K562 (cell line): ENCODE measurements at regions of chr18 and their contacts with region 1.

Region 1: GRCh38 chr18:11654736-11655605 is 34.1 kb upstream of the GNAL start:
- DNase-seq: peak; percentile 58 to 75 (median 70)
- ATAC-seq: peak; percentile 91
- H3K4me3 ChIP-seq: no peak overlapping the region
- H3K27ac ChIP-seq: no peak overlapping the region
- H3K4me1 ChIP-seq: no peaks in the 10 kb centered on the region
- H3K27me3 ChIP-seq: peaks cover 11 to 41% of the 10 kb centered on the region in 2 experiments; a peak in 3 of 5 replicates
- CTCF ChIP-seq: peak; percentile 77 to 87 (median 80)
- EP300 ChIP-seq: no peak
- POLR2A ChIP-seq: no peak
- RAD21 ChIP-seq: peak; percentile 54 to 80

Region 2: DNA sequence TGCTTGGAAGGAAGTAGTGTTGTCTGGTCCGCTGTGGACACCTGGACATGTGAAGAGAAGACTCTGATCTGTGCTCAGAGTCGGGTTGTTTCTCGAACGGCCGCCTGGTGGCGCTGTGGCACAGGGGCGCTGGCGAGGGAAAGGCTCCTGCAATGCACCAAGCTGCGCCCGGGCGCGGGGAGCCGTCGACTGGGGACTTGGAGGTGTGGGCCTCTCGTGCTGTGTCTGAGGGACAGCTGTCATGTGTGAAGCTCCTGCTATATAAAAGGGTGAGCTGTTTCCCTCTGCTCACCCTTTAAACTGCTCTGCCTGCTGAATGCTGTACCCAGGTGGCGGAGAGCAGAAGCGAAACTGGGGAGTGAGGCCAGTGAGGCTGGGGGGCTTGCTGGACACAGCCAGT is 78.1 kb after region 1 on chr18:
- CTCF ChIA-PET with region 1: no interaction called
- POLR2A ChIA-PET with region 1: no interaction called
- in situ Hi-C with region 1: loop called (anchors 5 kb)
- intact Hi-C with region 1: loop called (anchors 5 kb)
- DNase-seq: peak; percentile 78 to 81 (median 78)
- ATAC-seq: peak; percentile 99
- H3K4me3 ChIP-seq: no peak overlapping the region
- H3K27ac ChIP-seq: no peak overlapping the region
- H3K4me1 ChIP-seq: peaks cover 0 to 4% of the 10 kb centered on the region in 2 experiments; a peak in 1 of 5 replicates
- H3K27me3 ChIP-seq: peaks cover 12 to 47% of the 10 kb centered on the region in 2 experiments
- CTCF ChIP-seq: peak; percentile 86 to 93 (median 92)
- EP300 ChIP-seq: no peak
- POLR2A ChIP-seq: no peak
- RAD21 ChIP-seq: peak; percentile 71 to 93

Region 3: GRCh38 chr18:11741505-11742145 is 86.7 kb after region 1 on chr18:
- CTCF ChIA-PET with region 1: interaction called, 7 read pairs
- POLR2A ChIA-PET with region 1: no interaction called
- in situ Hi-C with region 1: no loop called
- intact Hi-C with region 1: loop called (anchors 5 kb)
- DNase-seq: peak; percentile 35 to 63 (median 61)
- ATAC-seq: peak; percentile 88
- H3K4me3 ChIP-seq: no peak overlapping the region
- H3K27ac ChIP-seq: no peak overlapping the region
- H3K4me1 ChIP-seq: no peaks in the 10 kb centered on the region
- H3K27me3 ChIP-seq: peaks cover 36 to 58% of the 10 kb centered on the region in 2 experiments
- CTCF ChIP-seq: peak; percentile 58 to 69 (median 63)
- EP300 ChIP-seq: no peak
- POLR2A ChIP-seq: no peak
- RAD21 ChIP-seq: peak in 1 of 2 experiments; percentile 62; a peak in 3 of 4 replicates

Region 4: DNA sequence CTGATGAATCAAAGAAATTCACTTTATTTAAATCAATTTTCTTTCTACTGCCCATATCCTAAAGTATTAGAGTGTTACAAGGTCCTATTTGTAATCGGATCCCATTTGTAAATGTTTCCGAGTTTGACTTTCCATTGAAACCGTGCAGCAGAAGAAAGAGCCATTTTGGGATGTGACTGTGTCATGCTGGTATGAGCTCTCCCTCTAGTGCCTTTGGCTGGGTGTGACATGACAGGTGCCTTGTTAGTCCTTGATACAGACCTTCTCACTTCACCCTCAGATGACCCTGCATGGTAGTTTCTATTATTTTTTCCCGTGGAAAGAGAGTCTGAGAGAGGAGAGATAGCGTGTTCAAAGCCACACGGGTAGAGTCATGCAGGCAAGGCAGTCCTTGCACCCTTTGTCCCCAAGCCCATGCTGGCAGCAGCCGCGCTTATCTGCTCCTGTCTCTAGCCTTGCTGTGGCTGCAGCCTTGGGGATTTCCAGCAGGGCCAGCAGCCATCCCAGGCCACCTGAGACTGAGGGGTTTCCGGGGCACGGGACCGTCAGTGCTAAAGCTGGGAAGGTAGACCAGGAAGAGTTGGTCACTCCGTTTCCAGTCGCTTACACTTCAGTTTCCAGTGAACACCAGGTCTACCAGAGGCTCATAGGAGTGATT is 217.6 kb after region 1 on chr18:
- CTCF ChIA-PET with region 1: no interaction called
- POLR2A ChIA-PET with region 1: no interaction called
- in situ Hi-C with region 1: no loop called
- intact Hi-C with region 1: loop called (anchors 5 kb)
- DNase-seq: peak; percentile 62 to 72 (median 68)
- ATAC-seq: peak; percentile 98
- H3K4me3 ChIP-seq: no peak overlapping the region
- H3K27ac ChIP-seq: no peak overlapping the region
- H3K4me1 ChIP-seq: peaks cover 0 to 3% of the 10 kb centered on the region in 2 experiments; a peak in 1 of 5 replicates
- H3K27me3 ChIP-seq: peaks cover 0 to 17% of the 10 kb centered on the region in 2 experiments; a peak in 4 of 5 replicates
- CTCF ChIP-seq: peak; percentile 72 to 84 (median 79)
- EP300 ChIP-seq: no peak
- POLR2A ChIP-seq: no peak
- RAD21 ChIP-seq: peak; percentile 79 to 95

Region 5: DNA sequence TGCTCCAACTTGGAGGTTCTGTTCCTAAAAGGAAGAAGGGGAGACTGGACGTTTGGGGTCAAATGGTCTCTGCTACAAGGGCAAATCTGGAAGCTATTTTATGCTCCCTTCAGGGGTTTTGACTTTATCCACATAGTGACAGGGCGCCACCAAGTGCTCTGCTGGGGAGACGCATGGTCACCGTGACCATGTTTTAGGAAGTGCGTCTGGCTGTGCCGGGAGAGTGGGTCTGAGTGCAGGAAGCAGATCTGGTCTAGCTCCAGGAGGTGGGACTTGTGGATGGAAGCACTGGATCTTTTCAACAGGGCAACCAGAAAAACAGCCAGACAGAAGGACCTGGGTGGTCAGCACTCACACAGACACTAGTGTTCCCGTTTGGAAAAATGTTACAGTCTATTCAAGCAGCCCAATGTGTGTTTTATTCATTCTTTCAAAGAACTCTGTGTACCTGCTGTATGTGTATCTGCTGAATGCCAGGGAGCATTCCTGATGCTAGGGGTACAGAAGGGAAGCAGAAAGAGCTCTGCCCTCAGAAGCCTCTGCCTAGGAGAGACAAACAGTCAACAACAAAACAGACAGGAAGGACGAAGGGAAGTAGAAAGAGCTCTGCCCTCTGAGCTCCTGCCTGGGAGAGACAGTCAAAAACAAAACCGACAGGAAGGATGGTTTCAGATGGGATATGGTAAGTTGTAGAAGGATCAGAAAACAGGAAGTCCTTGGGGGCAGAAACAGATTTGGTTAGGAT is 340.6 kb after region 1 on chr18:
- CTCF ChIA-PET with region 1: no interaction called
- POLR2A ChIA-PET with region 1: no interaction called
- in situ Hi-C with region 1: no loop called
- intact Hi-C with region 1: loop called (anchors 5 kb)
- DNase-seq: peak; percentile 65 to 83 (median 72)
- ATAC-seq: peak; percentile 95
- H3K4me3 ChIP-seq: no peak overlapping the region
- H3K27ac ChIP-seq: no peak overlapping the region
- H3K4me1 ChIP-seq: peaks cover 0 to 4% of the 10 kb centered on the region in 2 experiments; a peak in 2 of 5 replicates
- H3K27me3 ChIP-seq: peaks cover 0 to 4% of the 10 kb centered on the region in 2 experiments; a peak in 1 of 5 replicates
- CTCF ChIP-seq: peak; percentile 94 to 96 (median 96)
- EP300 ChIP-seq: no peak
- POLR2A ChIP-seq: no peak
- RAD21 ChIP-seq: peak; percentile 73 to 97

Region 6: GRCh38 chr18:12038639-12039417 is 383.9 kb after region 1 on chr18:
- CTCF ChIA-PET with region 1: interaction called, 12 read pairs
- POLR2A ChIA-PET with region 1: no interaction called
- in situ Hi-C with region 1: loop called (anchors 10 kb)
- intact Hi-C with region 1: loop called (anchors 10 kb)
- DNase-seq: peak; percentile 72 to 84 (median 80)
- ATAC-seq: peak; percentile 96
- H3K4me3 ChIP-seq: peak overlapping the region; percentile 31; the same call in 1 of the 2 replicates
- H3K27ac ChIP-seq: no peak overlapping the region
- H3K4me1 ChIP-seq: peaks cover 0 to 13% of the 10 kb centered on the region in 2 experiments; a peak in 2 of 5 replicates
- H3K27me3 ChIP-seq: peaks cover 4 to 38% of the 10 kb centered on the region in 2 experiments; a peak in 4 of 5 replicates
- CTCF ChIP-seq: peak; percentile 89 to 93 (median 90)
- EP300 ChIP-seq: no peak
- POLR2A ChIP-seq: no peak
- RAD21 ChIP-seq: peak; percentile 92 to 96

Region 7: DNA sequence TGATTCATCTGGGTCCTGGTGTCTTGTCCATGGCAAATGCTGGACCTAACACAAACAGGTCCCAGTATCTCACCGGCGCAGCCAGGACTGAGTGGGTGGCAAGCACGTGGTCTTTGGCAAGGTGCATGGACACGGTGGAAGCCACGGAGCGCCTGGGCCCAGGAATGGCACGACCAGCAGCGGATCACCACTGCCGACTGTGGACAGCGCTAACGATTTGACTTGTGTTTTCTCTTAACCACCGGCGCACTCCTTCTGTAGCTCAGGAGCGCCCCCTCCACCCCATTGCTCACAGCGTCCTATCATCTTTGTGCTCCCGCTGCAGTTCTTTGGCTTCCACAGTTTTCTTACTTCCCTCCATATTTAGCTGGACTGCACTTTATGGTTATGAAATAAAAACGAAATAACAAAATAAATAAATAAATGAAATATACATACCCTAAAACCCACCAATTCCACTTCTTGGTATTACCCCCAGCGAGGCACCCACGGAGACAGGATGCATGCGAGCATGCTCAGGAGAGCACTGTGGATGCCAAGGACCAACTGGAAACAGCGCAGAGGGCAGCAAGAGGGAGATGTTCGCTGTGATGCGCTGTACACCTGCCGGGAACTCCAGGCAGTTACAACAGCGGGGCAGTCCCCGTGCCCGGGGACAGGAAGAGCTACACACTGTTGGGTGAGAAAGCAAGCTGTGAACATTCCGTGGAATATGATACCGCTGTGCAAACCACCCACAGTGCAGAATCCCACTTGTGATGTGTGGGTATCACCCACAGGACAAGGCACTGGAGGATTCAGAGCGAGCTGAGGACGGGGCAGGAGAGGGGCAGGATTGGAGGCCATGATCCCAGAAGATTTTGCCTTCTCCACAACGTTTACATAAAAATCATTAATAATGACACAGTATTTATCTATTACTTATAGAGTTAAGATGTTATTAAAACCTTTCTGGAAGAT is 592.2 kb after region 1 on chr18:
- CTCF ChIA-PET with region 1: interaction called, 3 read pairs
- POLR2A ChIA-PET with region 1: no interaction called
- in situ Hi-C with region 1: loop called (anchors 10 kb)
- intact Hi-C with region 1: no loop called
- DNase-seq: peak; percentile 62 to 78 (median 67)
- ATAC-seq: peak; percentile 97
- H3K4me3 ChIP-seq: no peak overlapping the region
- H3K27ac ChIP-seq: no peak overlapping the region
- H3K4me1 ChIP-seq: peaks cover 0 to 10% of the 10 kb centered on the region in 2 experiments; a peak in 2 of 5 replicates
- H3K27me3 ChIP-seq: peaks cover 44 to 64% of the 10 kb centered on the region in 2 experiments
- CTCF ChIP-seq: peak; percentile 84 to 90 (median 86)
- EP300 ChIP-seq: no peak
- POLR2A ChIP-seq: no peak
- RAD21 ChIP-seq: peak; percentile 70 to 82

Region 8: DNA sequence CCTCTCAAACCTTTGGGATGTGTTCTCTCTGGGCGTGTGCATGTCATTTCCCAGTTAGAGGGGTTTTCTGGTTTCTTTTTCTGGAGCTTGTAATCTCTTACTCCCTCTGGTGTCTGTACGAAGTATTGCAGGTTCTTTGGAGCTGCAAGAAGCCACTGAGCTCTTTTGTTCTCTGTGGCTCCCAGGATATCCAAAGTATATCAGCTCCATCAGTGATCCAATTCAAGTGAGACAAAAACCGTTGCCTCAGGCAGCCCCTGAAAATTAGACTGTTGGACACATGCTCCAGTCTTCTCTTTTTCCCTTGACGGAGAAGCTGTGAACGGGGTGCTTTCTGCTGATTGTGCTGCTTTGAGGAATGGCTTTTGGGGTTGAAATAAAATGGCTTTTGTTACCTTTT is 1504.6 kb after region 1 on chr18:
- CTCF ChIA-PET with region 1: no interaction called
- POLR2A ChIA-PET with region 1: no interaction called
- in situ Hi-C with region 1: no loop called
- intact Hi-C with region 1: no loop called
- DNase-seq: peak; percentile 60 to 73 (median 70)
- ATAC-seq: peak; percentile 84
- H3K4me3 ChIP-seq: no peak overlapping the region
- H3K27ac ChIP-seq: no peak overlapping the region
- H3K4me1 ChIP-seq: no peaks in the 10 kb centered on the region; a peak in 1 of 5 replicates
- H3K27me3 ChIP-seq: peaks cover 18 to 35% of the 10 kb centered on the region in 2 experiments
- CTCF ChIP-seq: peak; percentile 65 to 75 (median 74)
- EP300 ChIP-seq: no peak
- POLR2A ChIP-seq: no peak
- RAD21 ChIP-seq: peak; percentile 32 to 67; a peak in 3 of 4 replicates